CD4-positive, alpha-beta memory T cell (primary cell): ENCODE measurements at regions of chr6 and their contacts with region 1.

Region 1: GRCh38 chr6:107820338-107821261 is 3.5 kb downstream of the SCML4 start:
- DNase-seq: peak; percentile 42 to 59 (median 46)
- H3K4me3 ChIP-seq: peak overlapping the region; percentile 26 to 68
- H3K4me3 Mint-ChIP-seq: peak overlapping the region; percentile 94 to 98 (median 96)
- H3K27ac ChIP-seq: peak overlapping the region; percentile 97
- H3K27ac Mint-ChIP-seq: peak overlapping the region; percentile 99 to 100 (median 99)
- H3K4me1 ChIP-seq: peaks cover 71% of the 10 kb centered on the region
- H3K4me1 Mint-ChIP-seq: peaks cover 57 to 89% (median 72%) of the 10 kb centered on the region in 4 donors
- H3K27me3 ChIP-seq: no peaks in the 10 kb centered on the region
- H3K27me3 Mint-ChIP-seq: peaks cover 0 to 3% of the 10 kb centered on the region in 2 donors

Region 2: GRCh38 chr6:107731422-107732319 is 88.9 kb before region 1 on chr6:
- CTCF ChIA-PET with region 1: interaction called, 54 read pairs
- POLR2A ChIA-PET with region 1: interaction called, 270 read pairs
- intact Hi-C with region 1: loop called (anchors 1 kb)
- DNase-seq: peak; percentile 43 to 61 (median 46)
- H3K4me3 ChIP-seq: peak overlapping the region; percentile 71 to 88
- H3K4me3 Mint-ChIP-seq: peak overlapping the region; percentile 91 to 99 (median 96)
- H3K27ac ChIP-seq: peak overlapping the region; percentile 84
- H3K27ac Mint-ChIP-seq: peak overlapping the region; percentile 79 to 97 (median 92)
- H3K4me1 ChIP-seq: peaks cover 90% of the 10 kb centered on the region
- H3K4me1 Mint-ChIP-seq: peaks cover 53 to 96% (median 73%) of the 10 kb centered on the region in 4 donors
- H3K27me3 ChIP-seq: no peaks in the 10 kb centered on the region
- H3K27me3 Mint-ChIP-seq: no peaks in the 10 kb centered on the region

Region 3: DNA sequence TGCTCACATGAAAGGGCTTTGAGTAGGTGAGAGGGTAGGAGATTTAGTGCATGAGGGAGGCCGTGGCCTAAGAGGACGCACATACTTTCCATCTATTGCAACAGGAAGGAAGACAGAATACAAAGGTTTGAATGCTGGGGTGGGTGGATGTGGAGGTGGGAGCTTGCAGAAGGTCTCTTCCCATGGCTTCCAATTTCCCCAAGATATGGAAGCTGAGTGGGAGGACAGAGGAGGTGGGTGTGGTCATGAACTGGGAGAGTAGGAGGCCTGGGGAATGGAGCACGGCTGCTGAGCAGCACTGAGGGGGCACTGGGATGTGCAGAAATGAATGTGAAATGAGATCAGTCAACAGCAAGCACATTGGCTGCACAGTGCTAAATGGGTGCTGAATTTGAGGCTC is 66.8 kb before region 1 on chr6:
- CTCF ChIA-PET with region 1: interaction called, 3 read pairs
- POLR2A ChIA-PET with region 1: interaction called, 47 read pairs
- intact Hi-C with region 1: no loop called
- DNase-seq: no peak
- H3K4me3 ChIP-seq: no peak overlapping the region
- H3K4me3 Mint-ChIP-seq: peak overlapping the region in 7 of 8 donors; percentile 57 to 77 (median 64)
- H3K27ac ChIP-seq: no peak overlapping the region
- H3K27ac Mint-ChIP-seq: peak overlapping the region in 6 of 7 donors; percentile 47 to 90 (median 78)
- H3K4me1 ChIP-seq: peaks cover 64% of the 10 kb centered on the region
- H3K4me1 Mint-ChIP-seq: peaks cover 56 to 91% (median 77%) of the 10 kb centered on the region in 4 donors
- H3K27me3 ChIP-seq: no peaks in the 10 kb centered on the region
- H3K27me3 Mint-ChIP-seq: no peaks in the 10 kb centered on the region

Region 4: GRCh38 chr6:107793191-107793590 is 27.4 kb before region 1 on chr6:
- CTCF ChIA-PET with region 1: interaction called, 7 read pairs
- POLR2A ChIA-PET with region 1: interaction called, 150 read pairs
- intact Hi-C with region 1: no loop called
- DNase-seq: peak in 1 of 5 donors; percentile 28
- H3K4me3 ChIP-seq: no peak overlapping the region
- H3K4me3 Mint-ChIP-seq: peak overlapping the region in 7 of 8 donors; percentile 4 to 72 (median 49)
- H3K27ac ChIP-seq: no peak overlapping the region
- H3K27ac Mint-ChIP-seq: peak overlapping the region; percentile 26 to 95 (median 88)
- H3K4me1 ChIP-seq: peaks cover 94% of the 10 kb centered on the region
- H3K4me1 Mint-ChIP-seq: peaks cover 68 to 91% (median 80%) of the 10 kb centered on the region in 4 donors
- H3K27me3 ChIP-seq: no peaks in the 10 kb centered on the region
- H3K27me3 Mint-ChIP-seq: no peaks in the 10 kb centered on the region

Region 5: DNA sequence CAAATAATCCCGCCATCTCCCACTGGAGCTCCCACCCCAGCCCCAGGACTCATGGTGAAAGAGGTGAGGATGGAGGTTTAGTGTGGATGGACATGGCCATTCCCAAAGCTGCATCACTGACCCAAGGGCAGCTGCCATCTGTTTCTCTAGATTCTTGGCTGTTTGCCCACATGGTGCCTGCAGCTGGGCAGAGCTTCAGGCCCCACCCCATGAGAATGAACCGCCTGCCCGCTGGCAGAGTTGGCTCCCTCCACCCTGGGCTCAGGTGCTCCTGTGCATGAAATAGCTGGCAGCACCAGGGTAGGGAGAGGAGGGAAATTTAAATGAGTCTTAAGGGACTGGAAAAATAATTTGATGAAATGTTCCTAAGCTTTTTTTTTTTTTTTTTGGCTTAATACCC is 13.9 kb before region 1 on chr6:
- CTCF ChIA-PET with region 1: interaction called, 8 read pairs
- POLR2A ChIA-PET with region 1: interaction called, 25 read pairs
- intact Hi-C with region 1: loop called (anchors 1 kb)
- DNase-seq: no peak
- H3K4me3 ChIP-seq: no peak overlapping the region
- H3K4me3 Mint-ChIP-seq: no peak overlapping the region
- H3K27ac ChIP-seq: no peak overlapping the region
- H3K27ac Mint-ChIP-seq: peak overlapping the region in 2 of 7 donors; percentile 36 to 76
- H3K4me1 ChIP-seq: peaks cover 61% of the 10 kb centered on the region
- H3K4me1 Mint-ChIP-seq: peaks cover 47 to 86% (median 63%) of the 10 kb centered on the region in 4 donors
- H3K27me3 ChIP-seq: no peaks in the 10 kb centered on the region
- H3K27me3 Mint-ChIP-seq: no peaks in the 10 kb centered on the region

Region 6: GRCh38 chr6:107957909-107958688 is 137.5 kb after region 1 on chr6 and contains the start of gene SEC63:
- CTCF ChIA-PET with region 1: no interaction called
- POLR2A ChIA-PET with region 1: interaction called, 19 read pairs
- intact Hi-C with region 1: loop called (anchors 5 kb)
- DNase-seq: peak; percentile 95 to 96 (median 96)
- H3K4me3 ChIP-seq: peak within 1 kb of the TSS; percentile 55 to 80
- H3K4me3 Mint-ChIP-seq: peak within 1 kb of the TSS; percentile 92 to 100 (median 98)
- H3K27ac ChIP-seq: peak within 1 kb of the TSS; percentile 86
- H3K27ac Mint-ChIP-seq: peak within 1 kb of the TSS; percentile 92 to 98 (median 97)
- H3K4me1 ChIP-seq: peaks cover 29% of the 10 kb centered on the region
- H3K4me1 Mint-ChIP-seq: peaks cover 18 to 39% (median 29%) of the 10 kb centered on the region in 4 donors
- H3K27me3 ChIP-seq: no peaks in the 10 kb centered on the region
- H3K27me3 Mint-ChIP-seq: no peaks in the 10 kb centered on the region
- total RNA-seq, gene SEC63: 91.7 to 95.5 TPM

Region 7: DNA sequence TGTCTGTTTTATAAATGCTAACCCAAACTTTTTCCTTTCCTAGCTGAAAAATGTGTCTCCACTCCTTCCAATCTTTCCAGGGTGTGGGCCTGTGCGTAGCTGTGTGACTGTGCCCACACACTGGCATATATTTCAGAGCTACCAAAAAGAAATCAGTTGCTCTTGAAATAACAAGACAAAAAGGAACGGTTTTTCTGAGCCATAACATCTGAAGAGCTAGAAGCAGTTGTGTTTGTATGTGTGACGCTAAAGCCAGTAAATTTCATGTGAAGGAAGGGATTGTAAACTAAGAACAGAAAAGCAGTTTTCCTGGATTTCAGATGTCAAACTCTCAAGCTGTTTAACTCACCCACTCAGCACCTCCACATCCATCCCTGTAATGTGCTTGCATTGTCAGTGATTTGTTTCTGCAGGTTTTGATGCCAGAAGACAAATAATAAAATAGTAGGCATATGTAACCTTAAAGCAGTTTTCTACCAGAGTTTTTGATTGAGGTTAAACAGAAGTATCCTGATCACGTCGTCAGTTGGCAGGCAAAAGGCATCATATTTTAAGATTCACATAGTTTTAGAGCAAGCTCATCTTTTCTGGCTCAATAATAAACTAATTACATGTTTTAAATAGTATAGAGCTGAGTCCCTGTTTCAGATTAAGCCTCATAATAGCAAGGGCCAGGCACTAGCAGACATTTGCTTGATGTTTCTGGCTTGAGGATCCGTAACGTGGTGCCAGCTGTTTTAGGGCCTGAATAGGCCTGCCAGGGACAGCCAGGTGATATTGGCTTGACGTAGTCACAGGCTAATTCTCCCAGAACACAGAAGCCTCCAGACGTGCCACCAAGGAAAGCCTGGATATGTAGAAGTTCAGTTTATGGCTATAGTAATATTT is 831.0 kb after region 1 on chr6:
- CTCF ChIA-PET with region 1: no interaction called
- POLR2A ChIA-PET with region 1: no interaction called
- intact Hi-C with region 1: no loop called
- DNase-seq: no peak
- H3K4me3 ChIP-seq: no peak overlapping the region
- H3K4me3 Mint-ChIP-seq: no peak overlapping the region
- H3K27ac ChIP-seq: no peak overlapping the region
- H3K27ac Mint-ChIP-seq: peak overlapping the region in 1 of 7 donors; percentile 60
- H3K4me1 ChIP-seq: peaks cover 14% of the 10 kb centered on the region
- H3K4me1 Mint-ChIP-seq: peaks cover 40 to 84% (median 51%) of the 10 kb centered on the region in 4 donors
- H3K27me3 ChIP-seq: no peaks in the 10 kb centered on the region
- H3K27me3 Mint-ChIP-seq: no peaks in the 10 kb centered on the region